Activated B cell treated with CpG ODN at 0.5 μM for 24 hours (primary cell): ENCODE measurements at regions of chr16 and their contacts with region 1.

Region 1: GRCh38 chr16:17901309-17901708 is 430.5 kb upstream of the XYLT1 start:
- DNase-seq: no peak
- ATAC-seq: no peak
- H3K4me3 Mint-ChIP-seq: no peak overlapping the region
- H3K27ac Mint-ChIP-seq: no peak overlapping the region
- H3K4me1 Mint-ChIP-seq: no peaks in the 10 kb centered on the region
- H3K27me3 Mint-ChIP-seq: peaks cover 7% of the 10 kb centered on the region
- CTCF ChIP-seq: no peak

Region 2: GRCh38 chr16:17080105-17080504 is 821.2 kb before region 1 on chr16:
- CTCF ChIA-PET with region 1: no interaction called
- POLR2A ChIA-PET with region 1: interaction called, 12 read pairs
- intact Hi-C with region 1: no loop called
- DNase-seq: no peak
- ATAC-seq: no peak
- H3K4me3 Mint-ChIP-seq: no peak overlapping the region
- H3K27ac Mint-ChIP-seq: no peak overlapping the region
- H3K4me1 Mint-ChIP-seq: peaks cover 5% of the 10 kb centered on the region
- H3K27me3 Mint-ChIP-seq: no peaks in the 10 kb centered on the region
- CTCF ChIP-seq: no peak

Region 3: GRCh38 chr16:17945080-17945601 is 43.8 kb after region 1 on chr16:
- CTCF ChIA-PET with region 1: no interaction called
- POLR2A ChIA-PET with region 1: no interaction called
- intact Hi-C with region 1: no loop called
- DNase-seq: no peak
- ATAC-seq: no peak
- H3K4me3 Mint-ChIP-seq: no peak overlapping the region
- H3K27ac Mint-ChIP-seq: no peak overlapping the region
- H3K4me1 Mint-ChIP-seq: peaks cover 5% of the 10 kb centered on the region
- H3K27me3 Mint-ChIP-seq: peaks cover 12% of the 10 kb centered on the region
- CTCF ChIP-seq: no peak

Region 4: GRCh38 chr16:17963185-17963836 is 62.0 kb after region 1 on chr16:
- CTCF ChIA-PET with region 1: no interaction called
- POLR2A ChIA-PET with region 1: no interaction called
- intact Hi-C with region 1: no loop called
- DNase-seq: no peak
- ATAC-seq: peak; percentile 25
- H3K4me3 Mint-ChIP-seq: no peak overlapping the region
- H3K27ac Mint-ChIP-seq: no peak overlapping the region
- H3K4me1 Mint-ChIP-seq: peaks cover 10% of the 10 kb centered on the region
- H3K27me3 Mint-ChIP-seq: peaks cover 2% of the 10 kb centered on the region
- CTCF ChIP-seq: no peak